ENCODE measurements at regions of chr19 and their contacts with region 1.

Region 1: DNA sequence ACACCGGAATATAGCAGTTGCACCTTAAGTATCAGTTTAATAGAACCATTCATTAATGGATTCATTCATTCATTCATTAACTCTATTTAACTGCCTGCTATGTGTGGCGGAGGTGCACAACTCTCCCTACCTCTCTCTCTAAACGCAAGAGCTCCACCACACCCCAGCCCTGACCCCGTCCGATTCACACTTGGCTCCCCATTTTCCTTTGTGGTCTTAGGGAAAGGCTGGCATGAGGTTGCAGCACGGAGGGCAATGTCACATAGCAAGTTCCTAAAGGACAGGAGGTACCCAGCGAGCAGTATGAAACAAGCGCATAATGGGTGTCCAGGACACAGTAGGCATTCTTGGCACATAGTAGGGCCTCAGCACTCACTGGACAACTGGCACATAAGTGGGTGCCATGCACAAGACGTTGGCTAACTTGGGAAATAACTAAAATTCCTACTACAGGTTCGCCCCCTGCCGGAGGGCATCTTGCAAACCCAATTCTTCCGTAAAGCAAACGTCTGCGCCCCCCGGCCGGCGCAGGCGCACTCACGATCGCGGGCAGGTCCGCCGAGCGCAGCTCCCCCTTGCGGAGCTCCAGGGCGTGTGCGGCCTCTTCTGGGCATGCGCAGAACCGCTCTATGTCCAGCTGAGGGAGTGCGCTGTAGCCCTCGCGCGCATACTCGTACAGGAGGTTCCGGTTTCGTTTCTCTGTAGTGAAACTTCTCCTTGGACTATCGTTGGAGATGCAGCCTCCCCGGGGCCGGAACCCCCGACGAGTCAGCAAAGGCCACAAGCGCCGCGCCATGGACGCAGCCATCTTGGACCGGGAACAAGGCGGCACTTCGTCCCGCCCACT is at the start of gene SARS2:
- DNase-seq: peak; percentile 94
- H3K4me3 Mint-ChIP-seq: peak within 1 kb of the TSS; percentile 98
- H3K27ac Mint-ChIP-seq: peak within 1 kb of the TSS; percentile 96
- H3K4me1 Mint-ChIP-seq: peaks cover 41% of the 10 kb centered on the region
- H3K27me3 Mint-ChIP-seq: no peaks in the 10 kb centered on the region
- total RNA-seq, gene SARS2: 43.6 to 52.6 TPM

Region 2: DNA sequence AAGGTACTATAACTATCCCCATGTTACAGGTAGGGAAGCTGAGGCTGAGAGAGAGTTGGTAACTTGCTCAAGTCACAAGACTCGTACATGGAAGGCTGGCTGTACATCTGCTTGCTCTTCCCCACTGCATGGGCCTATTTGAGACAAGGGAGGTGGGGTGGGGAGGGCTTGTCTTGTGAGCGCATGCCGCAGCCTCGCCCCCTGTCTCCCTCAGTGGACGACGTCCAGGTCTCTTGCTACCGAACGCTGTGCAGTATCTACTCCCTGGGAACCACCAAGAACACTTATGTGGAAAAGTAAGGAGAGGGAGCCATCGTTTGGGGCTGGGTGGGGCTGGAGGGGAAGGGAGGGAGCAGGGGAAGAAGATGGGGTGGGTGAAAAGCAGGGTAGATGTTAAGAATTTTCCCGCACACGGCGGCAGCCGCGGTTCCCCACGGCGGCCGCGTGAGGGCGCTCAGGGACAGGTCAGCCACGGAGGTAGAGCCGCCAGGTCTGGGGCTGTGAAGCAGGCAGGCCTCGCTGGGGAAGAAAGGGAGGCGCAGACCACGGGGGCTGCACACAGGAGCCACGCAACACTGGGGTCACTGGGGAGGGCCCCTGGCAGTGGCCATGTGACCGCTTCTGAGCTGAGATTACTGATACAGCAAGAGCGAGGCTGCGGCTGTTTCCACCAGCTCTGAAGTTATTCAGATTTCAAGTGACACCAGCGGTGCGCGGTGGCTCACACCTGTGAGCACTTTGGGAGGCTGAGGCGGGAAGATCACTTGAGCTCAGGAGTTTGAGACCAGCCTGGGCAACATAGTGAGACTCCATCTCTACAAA is 415.1 kb before region 1 on chr19:
- CTCF ChIA-PET with region 1: interaction called, 3 read pairs
- intact Hi-C with region 1: loop called (anchors 1 kb)
- DNase-seq: peak; percentile 82
- H3K4me3 Mint-ChIP-seq: no peak overlapping the region
- H3K27ac Mint-ChIP-seq: no peak overlapping the region
- H3K4me1 Mint-ChIP-seq: peaks cover 7% of the 10 kb centered on the region
- H3K27me3 Mint-ChIP-seq: no peaks in the 10 kb centered on the region

Region 3: DNA sequence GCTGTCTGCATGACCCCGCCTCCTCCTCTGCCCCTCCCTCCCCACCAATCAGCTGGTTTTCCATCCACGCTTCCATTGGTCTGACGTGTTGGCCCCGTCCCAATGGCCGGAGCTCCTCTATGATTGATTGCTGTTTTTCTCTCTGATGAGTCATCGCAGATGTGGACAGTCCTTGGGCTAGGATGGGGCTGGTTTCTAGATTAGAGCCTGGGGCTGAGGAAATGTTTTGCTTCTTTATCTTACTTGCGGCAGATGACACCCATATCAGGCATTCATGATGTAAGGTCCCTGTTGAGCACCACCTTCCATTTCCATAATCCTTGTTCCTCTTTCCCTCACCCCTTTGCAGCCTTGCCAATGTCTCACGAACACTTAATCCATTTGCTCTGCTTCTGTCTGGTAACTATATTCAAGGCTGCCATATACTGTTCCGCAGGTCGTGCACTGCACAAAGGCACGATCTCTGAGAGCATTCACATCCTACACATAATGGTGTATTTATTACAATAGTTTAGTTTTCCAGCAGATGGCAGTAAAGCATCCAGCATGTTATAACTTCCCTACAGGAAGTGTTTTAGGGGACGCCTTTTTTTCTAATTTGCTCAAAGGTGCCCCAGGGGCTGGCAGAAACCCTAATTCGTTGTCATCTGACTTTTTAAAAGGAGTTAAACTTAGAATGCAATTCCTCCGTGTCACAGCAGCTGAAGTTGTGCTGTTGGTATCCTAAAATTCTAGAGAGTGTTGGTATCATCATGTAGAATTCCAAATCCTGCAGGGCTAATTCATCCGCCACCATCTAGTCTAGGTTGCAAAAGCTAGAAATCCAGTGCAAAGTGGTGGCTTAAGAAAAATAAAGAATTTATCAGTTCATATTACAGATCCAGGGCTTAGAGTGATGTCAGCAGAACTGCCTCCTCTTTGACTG is 385.9 kb before region 1 on chr19:
- CTCF ChIA-PET with region 1: interaction called, 6 read pairs
- intact Hi-C with region 1: loop called (anchors 1 kb)
- DNase-seq: peak; percentile 53
- H3K4me3 Mint-ChIP-seq: peak overlapping the region; percentile 52
- H3K27ac Mint-ChIP-seq: no peak overlapping the region
- H3K4me1 Mint-ChIP-seq: peaks cover 16% of the 10 kb centered on the region
- H3K27me3 Mint-ChIP-seq: no peaks in the 10 kb centered on the region

Region 4: DNA sequence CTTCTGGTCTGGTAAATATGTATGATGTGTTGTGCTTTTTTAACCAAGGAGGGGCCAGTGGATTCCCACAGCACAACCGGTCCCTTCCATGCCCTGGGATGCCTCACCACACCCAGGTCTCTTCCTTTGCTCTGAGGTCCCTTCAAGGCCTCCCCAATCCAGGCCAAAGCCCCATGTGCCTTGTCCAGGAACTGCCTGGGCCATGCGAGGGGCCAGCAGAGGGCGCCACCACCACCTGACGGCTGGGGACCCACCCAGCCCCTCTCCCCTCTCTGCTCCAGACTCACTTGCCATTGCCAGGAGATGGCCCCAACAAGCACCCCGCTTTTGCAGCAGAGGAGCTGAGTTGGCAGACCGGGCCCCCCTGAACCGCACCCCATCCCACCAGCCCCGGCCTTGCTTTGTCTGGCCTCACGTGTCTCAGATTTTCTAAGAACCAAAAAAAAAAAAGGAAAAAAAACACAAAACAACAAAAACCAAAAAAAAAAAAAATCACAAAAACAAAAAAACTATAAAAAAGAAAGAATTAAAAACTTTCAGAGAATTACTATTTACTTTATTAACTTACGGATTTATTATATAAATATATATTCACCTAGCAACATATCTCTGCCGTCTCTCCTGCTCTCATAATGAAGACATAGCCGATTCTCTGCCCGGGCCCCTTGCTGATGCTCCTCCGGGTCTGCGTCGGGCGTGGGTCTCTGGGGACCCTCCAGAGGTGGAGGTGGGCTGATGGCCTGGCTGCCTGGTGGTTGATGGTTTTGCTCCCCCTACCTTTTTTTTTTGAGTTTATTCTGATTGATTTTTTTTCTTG is 200.3 kb before region 1 on chr19:
- CTCF ChIA-PET with region 1: interaction called, 3 read pairs
- intact Hi-C with region 1: loop called (anchors 1 kb)
- DNase-seq: peak; percentile 87
- H3K4me3 Mint-ChIP-seq: no peak overlapping the region
- H3K27ac Mint-ChIP-seq: no peak overlapping the region
- H3K4me1 Mint-ChIP-seq: peaks cover 9% of the 10 kb centered on the region
- H3K27me3 Mint-ChIP-seq: no peaks in the 10 kb centered on the region

Region 5: DNA sequence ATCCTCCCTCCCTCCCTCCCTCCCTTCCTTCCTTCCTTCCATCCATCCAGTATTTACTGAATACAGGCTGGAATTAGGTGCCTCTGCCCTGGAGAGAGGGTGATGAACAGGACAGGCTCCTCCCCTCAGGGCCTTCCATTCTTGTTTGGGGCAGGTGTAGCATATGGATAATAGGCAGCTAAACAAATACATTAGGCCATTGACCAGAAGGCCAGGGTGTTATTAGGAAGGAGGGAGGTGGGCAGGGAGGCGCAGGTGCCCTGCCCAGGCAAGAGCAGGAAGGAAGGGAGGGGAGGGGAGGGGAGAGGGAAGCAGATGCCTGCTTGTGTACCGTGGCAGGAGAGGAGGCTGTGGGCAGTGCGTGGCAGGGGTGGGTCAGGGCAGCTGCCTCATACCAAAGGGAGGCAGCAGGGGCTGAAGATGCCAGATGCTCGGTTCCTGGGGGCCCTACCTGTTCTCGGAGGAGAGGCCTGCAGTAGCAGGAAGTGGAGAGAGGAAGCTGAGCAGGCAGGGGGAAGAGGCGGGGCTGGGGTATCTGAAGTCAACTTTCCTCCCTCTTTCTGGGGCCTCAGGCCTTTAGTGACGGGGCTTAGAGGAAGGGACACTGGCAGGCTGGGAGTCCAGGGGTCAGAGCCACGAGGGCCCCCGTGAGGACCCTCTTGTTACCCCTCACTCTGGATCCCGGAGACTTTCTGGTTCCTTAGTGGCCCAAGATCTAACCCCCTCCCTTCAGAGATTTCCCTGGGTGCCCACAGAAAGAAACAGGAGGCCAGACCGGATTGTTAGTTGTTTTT is 52.2 kb before region 1 on chr19 and contains the start of gene RINL:
- CTCF ChIA-PET with region 1: interaction called, 11 read pairs
- intact Hi-C with region 1: loop called (anchors 1 kb)
- DNase-seq: peak; percentile 88
- H3K4me3 Mint-ChIP-seq: peak within 1 kb of the TSS; percentile 98
- H3K27ac Mint-ChIP-seq: peak within 1 kb of the TSS; percentile 99
- H3K4me1 Mint-ChIP-seq: peaks cover 29% of the 10 kb centered on the region
- H3K27me3 Mint-ChIP-seq: no peaks in the 10 kb centered on the region
- total RNA-seq, gene RINL: 107 to 117 TPM

Measured in activated naive CD4-positive, alpha-beta T cell treated with anti-CD3 and anti-CD28 coated beads for 36 hours (primary cell).